SK-N-SH (cell line): ENCODE measurements at regions of chr5 and their contacts with region 1.

Region 1: GRCh38 chr5:17189381-17190036 is 27.9 kb upstream of the BASP1 start:
- DNase-seq: peak; percentile 58
- H3K4me3 ChIP-seq: peak overlapping the region in 1 of 2 experiments; percentile 12; a peak in 1 of 4 replicates
- H3K27ac ChIP-seq: peak overlapping the region in 1 of 2 experiments; percentile 74; a peak in 2 of 4 replicates
- H3K4me1 ChIP-seq: peaks cover 0 to 40% of the 10 kb centered on the region in 2 experiments; a peak in 2 of 4 replicates
- H3K27me3 ChIP-seq: no peaks in the 10 kb centered on the region
- CTCF ChIP-seq: peak; percentile 96
- EP300 ChIP-seq: no peak
- RAD21 ChIP-seq: peak; percentile 76

Region 2: DNA sequence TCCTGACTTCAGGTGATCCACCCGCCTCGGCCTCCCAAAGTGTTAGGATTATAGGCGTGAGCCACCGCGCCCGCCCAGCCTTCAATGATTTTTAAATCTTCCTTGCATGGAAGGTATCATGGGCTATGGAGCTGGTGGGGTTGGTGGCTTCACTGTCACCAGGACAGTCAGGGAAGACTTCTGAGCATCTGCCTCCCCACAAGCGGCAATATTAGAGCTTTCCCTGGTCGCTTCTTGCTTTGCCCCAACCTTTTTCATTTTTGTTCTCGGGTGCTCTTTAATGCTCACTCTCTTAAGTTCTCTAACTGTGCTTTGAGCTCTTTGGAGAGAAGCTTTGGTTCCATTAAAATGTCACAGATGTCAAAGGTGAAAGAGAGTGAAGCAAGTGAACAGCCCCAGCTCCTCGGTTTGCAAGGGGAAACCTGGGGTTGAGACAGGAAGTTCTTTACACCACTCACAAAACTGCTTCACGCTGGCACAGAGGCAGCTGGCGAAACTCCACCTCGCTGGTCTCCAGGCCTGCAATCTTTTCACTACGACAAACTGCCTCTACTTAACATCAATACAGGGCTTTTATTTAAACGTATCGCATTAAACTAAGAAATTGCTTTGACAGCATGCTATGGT is 430.2 kb before region 1 on chr5:
- CTCF ChIA-PET with region 1: interaction called, 15 read pairs
- POLR2A ChIA-PET with region 1: no interaction called
- DNase-seq: no peak
- H3K4me3 ChIP-seq: no peak overlapping the region
- H3K27ac ChIP-seq: no peak overlapping the region
- H3K4me1 ChIP-seq: no peaks in the 10 kb centered on the region; a peak in 1 of 4 replicates
- H3K27me3 ChIP-seq: no peaks in the 10 kb centered on the region
- CTCF ChIP-seq: no peak
- EP300 ChIP-seq: no peak
- RAD21 ChIP-seq: no peak

Region 3: GRCh38 chr5:16797951-16798350 is 391.6 kb before region 1 on chr5:
- CTCF ChIA-PET with region 1: interaction called, 159 read pairs
- POLR2A ChIA-PET with region 1: no interaction called
- DNase-seq: no peak
- H3K4me3 ChIP-seq: no peak overlapping the region
- H3K27ac ChIP-seq: no peak overlapping the region
- H3K4me1 ChIP-seq: peaks cover 0 to 6% of the 10 kb centered on the region in 2 experiments; a peak in 1 of 4 replicates
- H3K27me3 ChIP-seq: no peaks in the 10 kb centered on the region
- CTCF ChIP-seq: no peak
- EP300 ChIP-seq: no peak
- RAD21 ChIP-seq: no peak

Region 4: GRCh38 chr5:16855485-16855884 is 334.0 kb before region 1 on chr5:
- CTCF ChIA-PET with region 1: interaction called, 18 read pairs
- POLR2A ChIA-PET with region 1: no interaction called
- DNase-seq: peak; percentile 71
- H3K4me3 ChIP-seq: no peak overlapping the region
- H3K27ac ChIP-seq: peak overlapping the region; percentile 43 to 91; a peak in 3 of 4 replicates
- H3K4me1 ChIP-seq: peaks cover 27 to 37% of the 10 kb centered on the region in 2 experiments; a peak in 3 of 4 replicates
- H3K27me3 ChIP-seq: no peaks in the 10 kb centered on the region
- CTCF ChIP-seq: no peak
- EP300 ChIP-seq: peak in 1 of 2 experiments; percentile 80; a peak in 2 of 4 replicates
- RAD21 ChIP-seq: peak; percentile 31

Region 5: DNA sequence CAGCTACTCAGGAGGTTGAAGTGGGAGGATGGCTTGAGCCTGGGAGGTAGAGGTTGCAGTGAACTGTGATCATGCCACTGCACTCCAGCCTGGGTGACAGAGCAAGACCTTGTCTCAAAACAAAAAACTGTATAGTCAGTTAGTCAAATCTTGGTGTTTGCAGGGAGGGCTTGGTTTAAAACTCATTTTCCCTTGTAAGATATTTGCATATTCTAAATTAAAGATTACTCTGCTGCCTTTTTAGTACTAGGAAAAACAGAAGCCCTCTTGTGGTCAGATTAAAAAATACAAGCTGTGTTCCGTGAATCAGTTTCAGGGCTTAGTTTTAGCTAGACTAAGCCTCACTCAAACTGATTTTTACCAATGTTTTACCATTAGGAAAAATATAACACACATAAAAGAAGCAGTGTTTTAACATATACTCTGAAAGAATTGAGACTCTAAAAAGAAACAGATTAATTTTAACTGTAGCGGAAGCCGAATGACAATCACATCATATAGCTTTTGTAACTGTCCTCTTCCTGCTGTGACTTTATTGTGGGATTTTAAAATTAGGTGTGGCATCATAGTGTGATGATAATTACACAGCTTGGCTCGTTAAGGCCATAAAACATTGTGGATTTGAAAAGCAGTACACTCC is 56.9 kb before region 1 on chr5:
- CTCF ChIA-PET with region 1: interaction called, 38 read pairs
- POLR2A ChIA-PET with region 1: no interaction called
- DNase-seq: peak; percentile 46
- H3K4me3 ChIP-seq: no peak overlapping the region; a peak in 1 of 4 replicates
- H3K27ac ChIP-seq: no peak overlapping the region
- H3K4me1 ChIP-seq: peaks cover 0 to 17% of the 10 kb centered on the region in 2 experiments; a peak in 2 of 4 replicates
- H3K27me3 ChIP-seq: no peaks in the 10 kb centered on the region
- CTCF ChIP-seq: peak; percentile 79
- EP300 ChIP-seq: no peak
- RAD21 ChIP-seq: peak; percentile 66

Region 6: GRCh38 chr5:17204133-17204489 is 14.6 kb after region 1 on chr5:
- CTCF ChIA-PET with region 1: interaction called, 42 read pairs
- POLR2A ChIA-PET with region 1: no interaction called
- DNase-seq: peak; percentile 15
- H3K4me3 ChIP-seq: no peak overlapping the region
- H3K27ac ChIP-seq: no peak overlapping the region
- H3K4me1 ChIP-seq: no peaks in the 10 kb centered on the region; a peak in 2 of 4 replicates
- H3K27me3 ChIP-seq: no peaks in the 10 kb centered on the region
- CTCF ChIP-seq: no peak
- EP300 ChIP-seq: no peak
- RAD21 ChIP-seq: no peak